Activated CD4-positive, alpha-beta T cell treated with anti-CD3 and anti-CD28 coated beads for 36 hours (primary cell): ENCODE measurements at regions of chr14 and their contacts with region 1.

Region 1: GRCh38 chr14:73058224-73058921 is at the start of gene RBM25:
- DNase-seq: peak; percentile 97
- ATAC-seq: peak; percentile 95
- H3K4me3 Mint-ChIP-seq: no peak within 1 kb of the TSS
- H3K27ac Mint-ChIP-seq: no peak within 1 kb of the TSS
- H3K4me1 Mint-ChIP-seq: peaks cover 31% of the 10 kb centered on the region
- H3K27me3 Mint-ChIP-seq: no peaks in the 10 kb centered on the region
- total RNA-seq, gene RBM25: 95.6 to 115 TPM

Region 2: GRCh38 chr14:72755766-72756165 is 302.6 kb before region 1 on chr14:
- CTCF ChIA-PET with region 1: no interaction called
- POLR2A ChIA-PET with region 1: no interaction called
- intact Hi-C with region 1: no loop called
- DNase-seq: no peak
- ATAC-seq: no peak
- H3K4me3 Mint-ChIP-seq: no peak overlapping the region
- H3K27ac Mint-ChIP-seq: no peak overlapping the region
- H3K4me1 Mint-ChIP-seq: no peaks in the 10 kb centered on the region
- H3K27me3 Mint-ChIP-seq: no peaks in the 10 kb centered on the region

Region 3: DNA sequence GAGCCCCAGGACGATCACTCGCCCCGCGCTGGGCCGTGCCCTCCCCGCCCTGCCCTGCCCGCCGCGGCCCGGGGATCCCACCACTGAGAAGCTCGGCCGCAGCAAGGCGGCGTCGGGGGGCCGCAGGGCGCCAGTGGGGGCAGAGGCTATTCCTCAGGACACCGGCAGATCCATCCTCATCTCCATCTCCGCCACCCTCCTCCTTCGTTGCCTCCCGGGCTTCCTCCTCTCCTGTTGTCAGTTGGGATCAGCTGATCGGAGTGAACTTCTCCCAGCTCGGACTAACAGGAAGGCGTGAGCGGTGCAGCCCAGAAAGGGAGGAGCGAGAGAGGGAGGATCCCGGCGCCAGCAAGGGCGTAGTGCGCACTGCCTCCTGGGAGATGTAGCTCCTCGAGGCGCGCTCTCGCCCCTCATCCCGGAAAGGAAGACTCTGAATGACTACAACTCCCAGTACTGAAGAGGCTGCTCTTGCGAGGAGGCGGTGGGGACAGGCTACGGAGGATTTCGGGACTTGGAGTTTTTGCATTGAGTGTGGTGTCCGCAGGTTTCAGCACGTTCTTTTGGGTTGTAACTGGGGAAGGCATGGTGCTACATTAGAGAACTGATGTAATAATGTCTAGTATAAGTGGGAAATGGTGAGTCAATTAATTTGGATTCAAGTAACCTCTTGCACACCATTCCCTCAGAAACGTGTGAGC is 31.4 kb before region 1 on chr14 and contains the start of gene ZFYVE1:
- CTCF ChIA-PET with region 1: interaction called, 4 read pairs
- POLR2A ChIA-PET with region 1: interaction called, 24 read pairs
- intact Hi-C with region 1: loop called (anchors 1 kb)
- DNase-seq: peak; percentile 96
- ATAC-seq: peak; percentile 100
- H3K4me3 Mint-ChIP-seq: peak within 1 kb of the TSS; percentile 84
- H3K27ac Mint-ChIP-seq: peak within 1 kb of the TSS; percentile 87
- H3K4me1 Mint-ChIP-seq: peaks cover 35% of the 10 kb centered on the region
- H3K27me3 Mint-ChIP-seq: no peaks in the 10 kb centered on the region
- total RNA-seq, gene ZFYVE1: 8.3 to 9.4 TPM

Region 4: DNA sequence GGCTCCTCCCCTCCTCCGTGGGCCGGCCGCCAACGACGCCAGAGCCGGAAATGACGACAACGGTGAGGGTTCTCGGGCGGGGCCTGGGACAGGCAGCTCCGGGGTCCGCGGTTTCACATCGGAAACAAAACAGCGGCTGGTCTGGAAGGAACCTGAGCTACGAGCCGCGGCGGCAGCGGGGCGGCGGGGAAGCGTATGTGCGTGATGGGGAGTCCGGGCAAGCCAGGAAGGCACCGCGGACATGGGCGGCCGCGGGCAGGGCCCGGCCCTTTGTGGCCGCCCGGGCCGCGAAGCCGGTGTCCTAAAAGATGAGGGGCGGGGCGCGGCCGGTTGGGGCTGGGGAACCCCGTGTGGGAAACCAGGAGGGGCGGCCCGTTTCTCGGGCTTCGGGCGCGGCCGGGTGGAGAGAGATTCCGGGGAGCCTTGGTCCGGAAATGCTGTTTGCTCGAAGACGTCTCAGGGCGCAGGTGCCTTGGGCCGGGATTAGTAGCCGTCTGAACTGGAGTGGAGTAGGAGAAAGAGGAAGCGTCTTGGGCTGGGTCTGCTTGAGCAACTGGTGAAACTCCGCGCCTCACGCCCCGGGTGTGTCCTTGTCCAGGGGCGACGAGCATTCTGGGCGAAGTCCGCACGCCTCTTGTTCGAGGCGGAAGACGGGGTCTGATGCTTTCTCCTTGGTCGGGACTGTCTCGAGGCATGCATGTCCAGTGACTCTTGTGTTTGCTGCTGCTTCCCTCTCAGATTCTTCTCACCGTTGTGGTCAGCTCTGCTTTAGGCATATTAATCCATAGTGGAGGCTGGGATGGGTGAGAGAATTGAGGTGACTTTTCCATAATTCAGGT is 78.2 kb after region 1 on chr14 and contains the start of gene PSEN1:
- CTCF ChIA-PET with region 1: no interaction called
- POLR2A ChIA-PET with region 1: interaction called, 13 read pairs
- intact Hi-C with region 1: loop called (anchors 1 kb)
- DNase-seq: peak; percentile 99
- ATAC-seq: peak; percentile 95
- H3K4me3 Mint-ChIP-seq: peak within 1 kb of the TSS; percentile 86
- H3K27ac Mint-ChIP-seq: peak within 1 kb of the TSS; percentile 82
- H3K4me1 Mint-ChIP-seq: peaks cover 31% of the 10 kb centered on the region
- H3K27me3 Mint-ChIP-seq: no peaks in the 10 kb centered on the region
- total RNA-seq, gene PSEN1: 31.2 to 31.6 TPM

Region 5: DNA sequence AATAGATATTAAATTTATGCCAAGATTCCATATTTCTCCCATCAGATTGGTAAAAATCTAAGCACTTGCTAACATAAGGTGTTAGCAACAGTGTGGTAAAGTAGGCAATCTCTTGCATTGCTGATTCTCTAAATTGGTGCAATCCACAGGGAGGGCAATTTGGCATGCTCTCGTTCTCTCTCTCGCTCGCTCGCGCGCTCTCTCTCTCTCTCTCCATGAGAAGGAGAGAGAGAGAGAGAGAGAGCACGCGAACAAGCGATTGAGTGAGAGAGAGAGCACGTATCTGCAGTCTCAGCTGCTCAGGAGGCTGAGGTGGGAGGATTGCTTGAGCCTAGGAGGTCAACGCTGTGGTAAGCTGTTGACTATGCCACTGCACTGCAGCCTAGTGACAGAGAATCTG is 103.9 kb after region 1 on chr14:
- CTCF ChIA-PET with region 1: no interaction called
- POLR2A ChIA-PET with region 1: no interaction called
- intact Hi-C with region 1: no loop called
- DNase-seq: no peak
- ATAC-seq: no peak
- H3K4me3 Mint-ChIP-seq: no peak overlapping the region
- H3K27ac Mint-ChIP-seq: no peak overlapping the region
- H3K4me1 Mint-ChIP-seq: peaks cover 2% of the 10 kb centered on the region
- H3K27me3 Mint-ChIP-seq: no peaks in the 10 kb centered on the region

Region 6: DNA sequence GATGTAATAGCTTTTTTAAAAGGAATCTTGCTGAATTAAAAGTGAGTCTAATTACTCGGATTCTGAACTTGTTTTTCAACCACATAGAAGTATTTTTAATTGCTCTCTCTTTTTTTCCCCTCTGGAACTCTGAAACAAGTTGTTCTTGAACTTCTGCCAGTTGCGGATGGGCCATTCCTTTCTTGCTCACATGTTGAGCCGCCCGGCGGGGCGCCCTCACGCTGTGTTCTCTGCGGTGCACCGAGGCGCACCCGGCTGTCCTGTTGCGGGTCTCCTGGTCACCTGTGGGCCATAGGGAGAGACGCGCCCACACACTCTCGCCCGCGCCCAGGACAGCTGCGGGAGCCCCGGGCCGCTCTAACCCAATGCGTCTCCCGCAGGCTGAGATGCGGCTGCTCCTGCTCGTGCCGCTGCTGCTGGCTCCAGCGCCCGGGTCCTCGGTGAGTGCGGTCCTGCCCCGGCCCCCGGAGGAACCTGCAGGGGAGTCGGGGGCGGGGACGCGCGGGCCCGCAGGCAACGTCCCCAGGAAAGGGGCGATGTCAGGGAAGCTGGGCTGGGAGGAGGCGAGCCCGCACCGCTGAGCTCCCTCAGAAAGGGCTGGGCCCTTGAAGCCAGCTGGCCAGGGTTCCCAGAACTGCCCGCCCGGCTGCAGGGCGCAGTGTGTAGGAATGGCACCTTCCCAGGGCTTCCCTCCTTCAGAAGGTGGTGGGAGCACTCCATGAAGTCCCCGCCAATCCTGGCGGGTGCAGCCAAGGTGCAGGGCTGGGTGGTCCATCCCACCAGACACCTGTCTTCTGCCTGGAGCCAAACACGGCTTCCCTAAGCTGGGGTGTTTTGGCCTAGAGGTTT is 181.2 kb after region 1 on chr14:
- CTCF ChIA-PET with region 1: no interaction called
- POLR2A ChIA-PET with region 1: no interaction called
- intact Hi-C with region 1: no loop called
- DNase-seq: no peak
- ATAC-seq: no peak
- H3K4me3 Mint-ChIP-seq: no peak overlapping the region
- H3K27ac Mint-ChIP-seq: no peak overlapping the region
- H3K4me1 Mint-ChIP-seq: peaks cover 11% of the 10 kb centered on the region
- H3K27me3 Mint-ChIP-seq: peaks cover 64% of the 10 kb centered on the region

Region 7: GRCh38 chr14:73644531-73645247 is 586.3 kb after region 1 on chr14 and contains the start of gene DNAL1:
- CTCF ChIA-PET with region 1: no interaction called
- POLR2A ChIA-PET with region 1: no interaction called
- intact Hi-C with region 1: loop called in 1 of 2 experiments (anchors 1 kb)
- DNase-seq: peak; percentile 95
- ATAC-seq: peak; percentile 100
- H3K4me3 Mint-ChIP-seq: peak within 1 kb of the TSS; percentile 98
- H3K27ac Mint-ChIP-seq: peak within 1 kb of the TSS; percentile 91
- H3K4me1 Mint-ChIP-seq: peaks cover 16% of the 10 kb centered on the region
- H3K27me3 Mint-ChIP-seq: no peaks in the 10 kb centered on the region
- total RNA-seq, gene DNAL1: 3.7 to 6.8 TPM

Region 8: GRCh38 chr14:73949744-73950734 is 891.7 kb after region 1 on chr14 and contains the starts of genes COQ6 and FAM161B:
- CTCF ChIA-PET with region 1: no interaction called
- POLR2A ChIA-PET with region 1: no interaction called
- intact Hi-C with region 1: loop called in 1 of 2 experiments (anchors 1 kb)
- DNase-seq: peak; percentile 95
- ATAC-seq: peak; percentile 96
- H3K4me3 Mint-ChIP-seq: peak within 1 kb of the TSS; percentile 91
- H3K27ac Mint-ChIP-seq: peak within 1 kb of the TSS; percentile 88
- H3K4me1 Mint-ChIP-seq: peaks cover 14% of the 10 kb centered on the region
- H3K27me3 Mint-ChIP-seq: no peaks in the 10 kb centered on the region
- total RNA-seq, gene COQ6: 14.1 to 17.0 TPM
- total RNA-seq, gene FAM161B: 1.2 to 1.4 TPM

Region 9: GRCh38 chr14:74762917-74763802 is 1704.8 kb after region 1 on chr14 and contains the start of gene YLPM1:
- CTCF ChIA-PET with region 1: no interaction called
- POLR2A ChIA-PET with region 1: no interaction called
- intact Hi-C with region 1: loop called in 1 of 2 experiments (anchors 10 kb)
- DNase-seq: peak; percentile 95
- ATAC-seq: peak; percentile 92
- H3K4me3 Mint-ChIP-seq: peak within 1 kb of the TSS; percentile 96
- H3K27ac Mint-ChIP-seq: peak within 1 kb of the TSS; percentile 97
- H3K4me1 Mint-ChIP-seq: peaks cover 42% of the 10 kb centered on the region
- H3K27me3 Mint-ChIP-seq: no peaks in the 10 kb centered on the region
- total RNA-seq, gene YLPM1: 53.0 to 60.9 TPM